MCF 10A (cell line): ENCODE measurements at regions of chr6 and their contacts with region 1.

Region 1: GRCh38 chr6:82247634-82248232 is at the start of gene IBTK:
- DNase-seq: peak; percentile 96
- H3K4me3 Mint-ChIP-seq: peak within 1 kb of the TSS; percentile 86
- H3K27ac Mint-ChIP-seq: peak within 1 kb of the TSS; percentile 95
- H3K4me1 Mint-ChIP-seq: peaks cover 31% of the 10 kb centered on the region
- H3K27me3 Mint-ChIP-seq: no peaks in the 10 kb centered on the region
- CTCF ChIP-seq: no peak
- total RNA-seq, gene IBTK: 59.0 and 66.2 TPM in 2 replicates

Region 2: GRCh38 chr6:82208913-82209312 is 38.8 kb before region 1 on chr6:
- CTCF ChIA-PET with region 1: no interaction called
- POLR2A ChIA-PET with region 1: no interaction called
- intact Hi-C with region 1: no loop called
- DNase-seq: peak; percentile 0
- H3K4me3 Mint-ChIP-seq: no peak overlapping the region
- H3K27ac Mint-ChIP-seq: peak overlapping the region; percentile 39
- H3K4me1 Mint-ChIP-seq: peaks cover 10% of the 10 kb centered on the region
- H3K27me3 Mint-ChIP-seq: no peaks in the 10 kb centered on the region
- CTCF ChIP-seq: no peak

Region 3: DNA sequence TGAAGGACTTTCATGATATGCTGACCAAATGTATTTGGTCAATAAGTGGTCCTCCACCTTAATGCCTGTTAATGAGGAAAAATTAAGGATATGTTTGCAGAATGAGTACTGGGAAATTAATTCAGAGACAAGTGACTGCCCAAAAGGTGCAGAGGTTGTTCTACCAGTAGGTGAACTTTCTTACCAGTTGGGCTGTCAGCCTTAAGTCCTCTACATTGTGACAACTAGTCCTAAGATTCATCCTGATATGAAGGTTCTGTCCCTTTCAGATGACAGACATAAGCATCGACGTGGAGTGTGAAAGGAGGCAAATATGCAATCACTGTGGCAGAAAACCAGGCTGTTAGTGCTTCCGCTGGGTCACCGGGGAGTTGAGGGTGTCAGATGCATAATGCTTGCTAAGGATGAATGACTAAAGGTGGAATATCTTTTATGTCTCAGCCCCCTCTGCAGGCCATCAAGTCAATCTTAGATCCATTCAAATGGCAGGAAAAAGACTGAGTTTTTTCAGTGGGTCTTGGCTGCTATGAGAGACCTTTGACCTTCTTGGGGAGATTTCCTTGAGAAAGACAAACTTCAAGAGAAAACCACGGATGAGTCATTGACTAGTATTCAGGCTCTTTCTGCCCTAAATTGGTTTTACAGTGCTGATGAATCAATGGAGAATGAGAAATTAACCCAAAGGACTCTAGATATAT is 341.9 kb after region 1 on chr6:
- CTCF ChIA-PET with region 1: interaction called, 3 read pairs
- POLR2A ChIA-PET with region 1: no interaction called
- intact Hi-C with region 1: loop called (anchors 1 kb)
- DNase-seq: peak; percentile 72
- H3K4me3 Mint-ChIP-seq: no peak overlapping the region
- H3K27ac Mint-ChIP-seq: no peak overlapping the region
- H3K4me1 Mint-ChIP-seq: no peaks in the 10 kb centered on the region
- H3K27me3 Mint-ChIP-seq: no peaks in the 10 kb centered on the region
- CTCF ChIP-seq: peak; percentile 30

Region 4: DNA sequence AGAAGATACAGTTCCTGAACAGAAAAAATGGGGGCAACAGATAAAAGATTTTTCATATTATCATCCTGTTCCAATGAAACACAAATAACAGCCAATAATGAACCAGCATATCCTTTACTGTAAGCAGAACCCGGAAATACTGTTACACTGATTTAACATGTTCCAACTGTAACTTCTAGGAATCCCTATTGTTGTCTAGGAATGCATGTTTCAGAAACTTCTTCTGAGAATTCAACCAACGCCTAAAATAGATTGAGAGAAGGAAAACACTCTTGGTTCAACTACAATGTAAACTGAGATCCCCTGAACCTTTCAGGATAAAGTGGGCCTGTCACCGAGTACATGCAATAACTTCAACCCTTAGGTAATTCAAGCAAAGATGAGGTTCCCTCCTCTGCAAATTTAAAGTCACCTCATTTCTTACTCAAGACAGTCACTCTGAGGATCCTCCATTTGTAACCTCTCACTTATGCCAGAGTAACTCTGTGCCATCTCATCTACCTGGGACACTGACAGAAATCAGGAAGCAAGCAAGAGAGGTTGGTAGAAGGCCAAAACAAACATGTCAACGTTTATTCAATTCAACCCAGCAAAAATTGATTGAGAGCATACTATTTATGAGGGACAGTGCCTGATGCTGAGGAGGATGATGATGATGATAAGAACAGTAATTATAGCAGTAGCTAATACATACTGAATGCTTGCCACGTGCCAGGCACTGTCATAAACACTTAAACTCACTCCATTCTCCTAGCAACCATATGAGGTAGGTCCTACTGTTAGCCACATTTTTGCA is 803.8 kb after region 1 on chr6:
- CTCF ChIA-PET with region 1: interaction called, 132 read pairs
- POLR2A ChIA-PET with region 1: interaction called, 7 read pairs
- intact Hi-C with region 1: no loop called
- DNase-seq: no peak
- H3K4me3 Mint-ChIP-seq: no peak overlapping the region
- H3K27ac Mint-ChIP-seq: no peak overlapping the region
- H3K4me1 Mint-ChIP-seq: no peaks in the 10 kb centered on the region
- H3K27me3 Mint-ChIP-seq: no peaks in the 10 kb centered on the region
- CTCF ChIP-seq: no peak

Region 5: DNA sequence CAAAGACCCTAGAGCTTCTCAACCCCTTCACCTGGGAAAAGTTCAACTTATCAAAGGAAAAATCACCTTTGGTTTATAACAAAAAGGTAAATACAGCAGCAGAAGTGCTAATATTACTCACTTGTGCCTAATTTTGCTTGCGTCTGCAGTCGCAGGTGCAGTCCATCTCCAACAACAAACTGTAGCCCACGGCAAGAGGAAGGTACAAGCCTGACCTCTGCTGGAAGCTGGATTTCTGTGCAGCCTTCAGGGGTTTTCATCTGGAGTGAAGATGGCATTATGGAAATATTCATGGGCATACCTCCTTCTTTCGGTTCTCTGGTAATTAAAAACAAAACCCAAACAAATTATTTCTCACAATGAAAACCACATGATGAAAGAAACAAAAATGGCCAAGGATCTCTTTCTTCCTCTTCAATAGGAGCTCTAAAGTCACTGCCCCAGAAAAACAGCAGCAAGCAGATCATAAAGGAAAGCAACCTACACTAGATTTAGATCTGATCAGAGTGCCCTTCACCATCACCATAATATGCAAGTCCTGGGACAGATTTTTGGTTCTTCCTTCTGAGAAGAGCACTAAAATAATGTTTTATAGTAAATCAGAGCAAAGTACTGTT is 810.1 kb after region 1 on chr6:
- CTCF ChIA-PET with region 1: interaction called, 132 read pairs
- POLR2A ChIA-PET with region 1: interaction called, 7 read pairs
- intact Hi-C with region 1: loop called (anchors 1 kb)
- DNase-seq: peak; percentile 68
- H3K4me3 Mint-ChIP-seq: no peak overlapping the region
- H3K27ac Mint-ChIP-seq: no peak overlapping the region
- H3K4me1 Mint-ChIP-seq: peaks cover 5% of the 10 kb centered on the region
- H3K27me3 Mint-ChIP-seq: no peaks in the 10 kb centered on the region
- CTCF ChIP-seq: peak; percentile 73

Region 6: GRCh38 chr6:83192871-83193746 is 945.4 kb after region 1 on chr6 and contains the starts of genes PGM3 and RWDD2A:
- CTCF ChIA-PET with region 1: no interaction called
- POLR2A ChIA-PET with region 1: no interaction called
- intact Hi-C with region 1: loop called (anchors 5 kb)
- DNase-seq: peak; percentile 88
- H3K4me3 Mint-ChIP-seq: peak within 1 kb of the TSS; percentile 88
- H3K27ac Mint-ChIP-seq: peak within 1 kb of the TSS; percentile 90
- H3K4me1 Mint-ChIP-seq: no peaks in the 10 kb centered on the region
- H3K27me3 Mint-ChIP-seq: no peaks in the 10 kb centered on the region
- CTCF ChIP-seq: no peak
- total RNA-seq, gene PGM3: 117 and 150 TPM in 2 replicates
- total RNA-seq, gene RWDD2A: 6.5 and 7.5 TPM in 2 replicates

Region 7: DNA sequence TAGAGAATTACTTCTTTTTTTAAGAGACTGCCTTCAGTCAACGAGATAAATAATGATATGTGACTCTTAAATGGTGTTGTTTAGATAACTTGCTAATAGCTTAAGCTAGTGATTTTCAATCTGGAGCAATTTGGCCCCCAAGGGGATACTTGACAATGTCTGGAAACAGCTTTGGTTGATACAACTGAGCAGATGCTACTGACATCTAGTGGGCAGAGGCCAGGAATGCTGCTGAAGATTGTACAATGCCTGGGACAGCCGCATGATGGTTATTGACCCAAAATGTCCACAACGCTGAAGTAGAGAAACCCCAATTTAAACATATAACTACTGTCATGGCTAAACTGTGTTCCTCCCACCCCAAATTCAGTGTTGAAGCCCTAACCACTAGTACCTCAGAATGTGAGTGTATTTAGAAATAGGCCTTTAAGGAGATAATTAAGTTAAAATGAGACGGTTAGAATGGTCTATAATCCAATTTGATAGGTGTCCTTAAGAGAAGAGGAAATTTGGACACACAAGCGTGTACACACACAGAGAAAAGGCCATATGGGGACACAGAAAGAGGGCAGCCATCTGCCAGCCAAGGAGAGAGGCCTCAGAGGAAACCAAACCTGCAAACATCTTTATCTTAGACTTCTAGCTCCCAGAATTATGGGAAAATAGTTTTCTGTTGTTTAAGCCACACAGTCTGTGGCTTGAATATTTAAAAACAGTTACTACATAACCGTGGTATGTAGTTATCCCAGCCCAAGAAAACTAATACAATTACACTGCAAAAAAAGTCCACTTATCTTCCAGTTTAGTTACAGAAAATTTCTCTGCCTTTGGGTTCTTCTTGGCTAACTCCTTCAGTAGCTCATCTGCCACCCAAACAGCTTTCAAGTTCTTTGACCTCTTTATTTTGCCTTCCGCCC is 967.7 kb after region 1 on chr6:
- CTCF ChIA-PET with region 1: no interaction called
- POLR2A ChIA-PET with region 1: interaction called, 4 read pairs
- intact Hi-C with region 1: loop called (anchors 10 kb)
- DNase-seq: peak; percentile 77
- H3K4me3 Mint-ChIP-seq: no peak overlapping the region
- H3K27ac Mint-ChIP-seq: no peak overlapping the region
- H3K4me1 Mint-ChIP-seq: no peaks in the 10 kb centered on the region
- H3K27me3 Mint-ChIP-seq: no peaks in the 10 kb centered on the region
- CTCF ChIP-seq: peak; percentile 71

Region 8: GRCh38 chr6:83430611-83431563 is 1183.2 kb after region 1 on chr6 and contains the start of gene ME1:
- CTCF ChIA-PET with region 1: interaction called, 3 read pairs
- POLR2A ChIA-PET with region 1: no interaction called
- intact Hi-C with region 1: loop called (anchors 10 kb)
- DNase-seq: peak; percentile 86
- H3K4me3 Mint-ChIP-seq: peak within 1 kb of the TSS; percentile 74
- H3K27ac Mint-ChIP-seq: peak within 1 kb of the TSS; percentile 73
- H3K4me1 Mint-ChIP-seq: peaks cover 16% of the 10 kb centered on the region
- H3K27me3 Mint-ChIP-seq: no peaks in the 10 kb centered on the region
- CTCF ChIP-seq: no peak
- total RNA-seq, gene ME1: 16.7 and 17.8 TPM in 2 replicates